ENCODE measurements at regions of chr10 and their contacts with region 1.

Region 1: DNA sequence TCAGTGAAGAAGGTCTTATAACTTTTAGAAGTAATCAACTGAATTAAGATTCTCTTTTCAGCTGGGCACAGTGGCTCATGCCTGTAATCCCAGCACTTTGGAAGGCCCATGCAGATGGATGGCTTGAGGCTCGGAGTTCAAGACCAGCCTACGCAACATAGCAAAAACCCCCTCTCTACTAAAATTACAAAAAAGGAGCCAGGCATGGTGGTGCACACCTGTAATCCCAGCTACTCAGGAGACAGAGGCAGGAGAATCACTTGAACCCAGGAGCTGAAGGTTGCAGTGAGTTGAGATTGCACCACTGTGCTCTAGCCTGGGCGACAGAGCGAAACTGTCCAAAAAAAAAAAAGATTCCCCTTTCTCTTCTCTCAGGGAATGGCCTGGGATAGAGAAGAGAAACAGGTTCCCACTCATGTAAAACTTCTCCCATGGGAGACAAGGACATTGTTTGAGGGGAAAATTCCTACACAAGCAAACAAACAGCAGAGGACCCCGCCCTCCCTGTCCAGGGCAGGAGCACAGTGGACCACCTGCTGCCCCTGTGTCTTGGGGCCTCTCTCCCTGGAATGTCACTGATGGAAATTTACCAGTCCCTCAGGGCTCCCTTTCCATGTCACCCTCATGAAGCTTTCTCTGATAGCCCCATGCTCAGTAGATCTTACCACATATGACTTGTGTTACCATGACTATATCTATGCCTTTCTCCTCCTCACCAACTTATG is 5.6 kb downstream of the IL2RA start:
- DNase-seq: peak in 1 of 14 experiments; percentile 2
- ATAC-seq: no peak
- H3K4me3 ChIP-seq: no peak overlapping the region
- H3K4me3 Mint-ChIP-seq: peak overlapping the region; percentile 23
- H3K27ac ChIP-seq: no peak overlapping the region
- H3K27ac Mint-ChIP-seq: peak overlapping the region; percentile 28
- H3K4me1 ChIP-seq: peaks cover 70% of the 10 kb centered on the region
- H3K4me1 Mint-ChIP-seq: peaks cover 78% of the 10 kb centered on the region
- H3K27me3 ChIP-seq: no peaks in the 10 kb centered on the region
- H3K27me3 Mint-ChIP-seq: no peaks in the 10 kb centered on the region
- CTCF ChIP-seq: no peak

Region 2: GRCh38 chr10:5710859-5711258 is 345.7 kb before region 1 on chr10:
- CTCF ChIA-PET with region 1: no interaction called
- POLR2A ChIA-PET with region 1: no interaction called
- intact Hi-C with region 1: no loop called
- DNase-seq: peak in 2 of 14 experiments; percentile 10 to 49
- ATAC-seq: no peak
- H3K4me3 ChIP-seq: peak overlapping the region; percentile 41
- H3K4me3 Mint-ChIP-seq: peak overlapping the region; percentile 84
- H3K27ac ChIP-seq: no peak overlapping the region
- H3K27ac Mint-ChIP-seq: peak overlapping the region; percentile 57
- H3K4me1 ChIP-seq: peaks cover 7% of the 10 kb centered on the region
- H3K4me1 Mint-ChIP-seq: peaks cover 88% of the 10 kb centered on the region
- H3K27me3 ChIP-seq: no peaks in the 10 kb centered on the region
- H3K27me3 Mint-ChIP-seq: no peaks in the 10 kb centered on the region
- CTCF ChIP-seq: no peak

Region 3: GRCh38 chr10:6005856-6006395 is 50.6 kb before region 1 on chr10:
- CTCF ChIA-PET with region 1: no interaction called
- POLR2A ChIA-PET with region 1: no interaction called
- intact Hi-C with region 1: no loop called
- DNase-seq: no peak
- ATAC-seq: no peak
- H3K4me3 ChIP-seq: no peak overlapping the region
- H3K4me3 Mint-ChIP-seq: no peak overlapping the region
- H3K27ac ChIP-seq: no peak overlapping the region
- H3K27ac Mint-ChIP-seq: no peak overlapping the region
- H3K4me1 ChIP-seq: peaks cover 9% of the 10 kb centered on the region
- H3K4me1 Mint-ChIP-seq: peaks cover 13% of the 10 kb centered on the region
- H3K27me3 ChIP-seq: peaks cover 0 to 2% of the 10 kb centered on the region in 2 experiments
- H3K27me3 Mint-ChIP-seq: peaks cover 11% of the 10 kb centered on the region
- CTCF ChIP-seq: no peak

Region 4: DNA sequence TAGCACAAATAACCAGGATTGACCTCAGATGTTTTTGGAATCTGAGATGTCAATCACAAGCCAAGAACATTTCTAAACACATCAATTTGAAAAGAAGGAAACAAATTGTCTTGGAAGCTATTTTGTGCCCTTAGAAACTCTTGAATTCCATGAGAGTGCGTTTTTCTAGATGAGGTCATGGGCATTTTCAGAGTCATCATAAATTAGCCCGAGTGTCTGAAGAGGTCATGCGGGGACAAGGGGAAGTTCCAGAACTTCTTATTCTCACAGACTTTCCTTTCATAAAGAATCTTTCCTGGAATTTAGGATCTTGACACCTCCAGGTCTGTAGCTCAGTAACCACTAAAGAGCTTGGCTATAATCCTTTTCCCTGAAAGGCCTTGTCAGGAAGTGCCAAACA is 22.6 kb before region 1 on chr10:
- CTCF ChIA-PET with region 1: interaction called, 12 read pairs
- POLR2A ChIA-PET with region 1: interaction called, 39 read pairs
- intact Hi-C with region 1: loop called (anchors 1 to 2 kb)
- DNase-seq: peak in 1 of 14 experiments; percentile 32
- ATAC-seq: no peak
- H3K4me3 ChIP-seq: no peak overlapping the region
- H3K4me3 Mint-ChIP-seq: no peak overlapping the region
- H3K27ac ChIP-seq: no peak overlapping the region
- H3K27ac Mint-ChIP-seq: peak overlapping the region; percentile 19
- H3K4me1 ChIP-seq: peaks cover 33% of the 10 kb centered on the region
- H3K4me1 Mint-ChIP-seq: peaks cover 39% of the 10 kb centered on the region
- H3K27me3 ChIP-seq: no peaks in the 10 kb centered on the region
- H3K27me3 Mint-ChIP-seq: no peaks in the 10 kb centered on the region
- CTCF ChIP-seq: no peak

Region 5: GRCh38 chr10:6128591-6129251 is 72.1 kb after region 1 on chr10:
- CTCF ChIA-PET with region 1: no interaction called
- POLR2A ChIA-PET with region 1: no interaction called
- intact Hi-C with region 1: no loop called
- DNase-seq: peak in 2 of 14 experiments; percentile 34 to 41
- ATAC-seq: no peak
- H3K4me3 ChIP-seq: no peak overlapping the region
- H3K4me3 Mint-ChIP-seq: no peak overlapping the region
- H3K27ac ChIP-seq: no peak overlapping the region
- H3K27ac Mint-ChIP-seq: no peak overlapping the region
- H3K4me1 ChIP-seq: peaks cover 31% of the 10 kb centered on the region
- H3K4me1 Mint-ChIP-seq: peaks cover 18% of the 10 kb centered on the region
- H3K27me3 ChIP-seq: no peaks in the 10 kb centered on the region
- H3K27me3 Mint-ChIP-seq: no peaks in the 10 kb centered on the region
- CTCF ChIP-seq: no peak

Measured in CD4-positive, alpha-beta T cell (primary cell).